Dorsolateral prefrontal cortex (tissue), 120 donors: ENCODE measurements at regions of chr12 and their contacts with region 1.

Region 1: DNA sequence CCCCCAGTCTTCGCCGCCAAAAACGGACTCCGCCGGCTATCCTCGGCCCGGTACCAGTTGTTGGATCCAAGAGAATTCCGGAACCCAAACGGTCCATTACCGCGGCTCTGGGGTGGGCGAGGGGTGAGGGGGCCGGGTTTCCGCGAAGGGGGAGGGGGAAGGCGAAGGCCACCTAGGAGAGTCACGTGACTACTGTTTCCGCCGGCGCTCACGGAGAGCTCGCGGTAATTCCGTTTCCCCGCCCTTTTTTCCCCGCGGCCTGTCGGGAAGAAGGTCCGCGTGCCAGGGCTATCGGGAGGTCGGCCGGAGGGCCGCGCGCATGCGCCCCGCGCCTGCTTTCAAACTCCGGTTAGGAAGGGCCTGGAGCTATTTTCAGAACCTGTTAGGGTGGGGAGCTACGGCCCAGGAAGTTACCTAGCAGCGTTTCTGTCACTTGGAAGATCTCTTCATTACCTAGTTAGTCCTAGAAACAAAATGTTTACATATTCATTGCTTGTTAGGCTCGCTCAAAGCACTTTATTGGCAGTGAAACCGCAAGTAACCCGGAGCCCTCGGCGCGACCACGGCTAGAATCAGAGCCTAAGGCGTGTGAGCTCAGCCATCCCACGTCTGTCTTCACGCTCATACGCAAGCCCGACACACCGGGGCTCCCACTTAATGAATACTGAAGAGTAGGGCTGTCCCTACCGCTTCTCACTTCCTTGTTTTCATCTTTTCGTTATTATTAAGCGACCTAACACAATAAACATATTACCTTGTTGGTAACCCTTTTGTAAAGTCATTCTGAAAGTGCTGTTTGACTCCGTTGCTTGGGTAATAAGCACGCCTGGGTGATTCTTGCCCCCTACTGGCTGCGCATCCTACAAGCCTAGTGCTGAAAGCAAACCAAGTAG is 624 bp upstream of the SBNO1 start:
- DNase-seq: peak; percentile 94 to 97 (median 97)
- H3K4me3 ChIP-seq: peak overlapping the region; percentile 56 to 97 (median 87)
- H3K27ac ChIP-seq: peak overlapping the region; percentile 76 to 99 (median 97)
- H3K27me3 ChIP-seq: no peaks in the 10 kb centered on the region
- CTCF ChIP-seq: peak; percentile 31 to 82 (median 71)

Region 2: DNA sequence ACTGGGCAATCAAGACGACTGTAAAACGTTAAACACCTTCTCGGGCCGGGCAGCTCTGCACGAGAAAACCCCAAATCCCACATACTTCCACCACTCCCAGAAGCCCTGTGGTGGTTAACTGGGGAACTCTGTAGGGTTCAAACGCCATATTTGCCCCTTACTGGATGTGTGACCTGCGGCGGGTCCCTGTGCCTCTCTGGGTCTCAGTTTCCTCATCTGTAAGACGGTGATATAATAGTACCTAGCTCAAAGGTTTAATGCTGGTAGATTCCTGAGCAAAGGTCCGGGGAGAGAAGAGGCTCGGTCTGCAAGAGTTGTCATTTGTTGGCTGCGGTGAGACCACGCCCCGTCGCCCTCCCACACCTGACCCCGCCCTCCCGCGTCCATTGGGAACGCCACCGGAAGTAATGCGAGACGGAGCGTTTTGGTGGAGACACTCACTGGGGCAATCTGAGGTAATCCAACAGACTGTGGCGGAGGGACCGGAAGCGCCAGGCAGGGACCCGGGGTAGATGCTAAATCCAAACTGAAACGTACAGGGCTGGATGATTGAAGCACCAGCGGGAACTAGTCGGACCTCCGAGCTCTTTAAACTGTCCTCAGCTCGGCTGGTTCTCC is 390.9 kb before region 1 on chr12:
- intact Hi-C with region 1: loop called in 1 of 2 experiments (anchors 10 kb)
- DNase-seq: peak; percentile 97 to 99 (median 98)
- H3K4me3 ChIP-seq: peak overlapping the region; percentile 71 to 100 (median 94)
- H3K27ac ChIP-seq: peak overlapping the region; percentile 94 to 100 (median 99)
- H3K27me3 ChIP-seq: no peaks in the 10 kb centered on the region
- CTCF ChIP-seq: peak in 5 of 56 donors; percentile 7 to 21 (median 15)

Region 3: DNA sequence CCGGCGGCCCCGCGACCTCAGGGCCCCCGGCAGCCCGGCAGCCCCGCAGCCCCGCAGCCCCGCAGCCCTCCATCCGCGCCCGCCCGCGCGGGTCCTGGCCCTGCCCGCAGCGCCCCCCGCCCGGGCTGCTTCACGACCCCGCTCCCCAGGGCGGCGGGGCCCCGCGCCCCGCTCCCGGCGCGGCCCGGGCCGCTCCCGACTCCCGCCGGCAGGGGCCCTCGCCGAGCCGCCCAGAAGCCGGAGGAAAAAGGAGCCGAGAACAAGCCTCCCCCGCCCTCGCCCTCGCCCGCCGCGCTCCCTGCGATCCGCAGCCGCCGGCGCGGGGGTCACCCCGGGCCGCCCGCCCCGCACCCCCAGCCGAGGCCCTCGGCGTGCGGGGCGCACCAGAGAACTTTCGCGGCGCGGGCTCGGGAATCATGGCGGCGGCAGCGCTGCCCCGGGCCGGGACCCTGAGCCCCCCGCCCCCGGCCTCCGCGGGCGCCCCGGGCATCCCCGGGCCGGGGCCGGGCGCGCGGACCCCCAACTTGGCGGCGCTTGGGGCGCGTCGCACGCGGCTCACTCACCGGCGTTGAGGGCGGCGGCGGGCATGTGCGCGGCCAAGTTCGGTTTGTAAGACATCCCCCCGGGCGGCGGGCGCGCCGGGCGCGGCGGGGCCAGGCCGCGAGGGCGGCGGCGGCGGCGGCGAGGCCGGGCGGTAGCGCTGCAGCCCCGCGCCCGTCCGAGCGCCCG is 94.1 kb before region 1 on chr12:
- intact Hi-C with region 1: loop called (anchors 1 to 2 kb)
- DNase-seq: peak in 9 of 10 donors; percentile 56 to 83 (median 68)
- H3K4me3 ChIP-seq: peak overlapping the region; percentile 50 to 87 (median 73)
- H3K27ac ChIP-seq: peak overlapping the region in 56 of 59 donors; percentile 88 to 99 (median 98)
- H3K27me3 ChIP-seq: no peaks in the 10 kb centered on the region
- CTCF ChIP-seq: peak in 39 of 56 donors; percentile 5 to 74 (median 47)

Region 4: GRCh38 chr12:123388177-123388947 is 23.1 kb after region 1 on chr12:
- intact Hi-C with region 1: loop called (anchors 1 to 2 kb)
- DNase-seq: peak; percentile 53 to 86 (median 71)
- H3K4me3 ChIP-seq: peak overlapping the region; percentile 47 to 93 (median 70)
- H3K27ac ChIP-seq: peak overlapping the region; percentile 75 to 98 (median 93)
- H3K27me3 ChIP-seq: no peaks in the 10 kb centered on the region
- CTCF ChIP-seq: peak in 50 of 56 donors; percentile 21 to 71 (median 46)

Region 5: DNA sequence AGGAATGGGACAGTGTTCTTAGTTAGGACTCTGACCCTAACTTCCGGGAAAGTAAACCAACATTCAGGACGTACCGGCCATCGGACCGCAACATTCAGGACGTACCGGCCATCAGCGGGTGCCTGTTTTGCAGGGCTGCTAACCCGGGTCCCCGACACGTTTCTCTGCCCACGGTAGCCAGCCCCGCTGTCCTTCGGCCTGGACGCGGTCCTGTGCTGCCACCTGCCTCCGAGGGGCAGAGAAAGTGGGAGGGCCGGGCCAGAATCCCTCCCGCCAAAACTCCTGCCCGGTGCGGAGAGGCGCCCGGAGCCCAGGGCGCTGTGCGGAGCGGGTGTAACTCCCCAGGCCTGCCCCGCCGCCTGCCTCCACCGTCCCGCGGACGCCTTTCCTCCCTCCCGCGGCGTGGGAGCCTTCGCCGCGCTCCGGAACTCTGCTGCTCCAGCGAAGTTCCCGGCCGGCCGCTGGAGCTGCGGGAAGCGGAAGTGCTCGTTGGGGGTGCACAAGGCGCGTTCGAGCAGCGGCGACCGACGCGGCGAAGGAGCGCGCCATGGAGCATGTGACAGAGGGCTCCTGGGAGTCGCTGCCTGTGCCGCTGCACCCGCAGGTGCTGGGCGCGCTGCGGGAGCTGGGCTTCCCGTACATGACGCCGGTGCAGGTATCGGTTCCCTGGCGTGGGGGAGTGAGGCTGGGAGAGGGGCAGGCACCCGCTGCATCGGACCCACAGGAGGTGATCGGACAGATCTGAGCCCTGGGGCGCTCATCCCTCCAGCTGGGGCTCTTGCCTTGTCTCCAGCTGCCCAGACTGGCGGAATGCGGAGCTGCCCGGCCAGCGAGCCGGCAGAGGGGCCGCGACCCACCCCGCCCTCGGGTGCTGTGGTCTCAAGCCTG is 236.6 kb after region 1 on chr12 and contains the start of gene DDX55:
- intact Hi-C with region 1: loop called in 1 of 2 experiments (anchors 1 kb)
- DNase-seq: peak; percentile 59 to 89 (median 84)
- H3K4me3 ChIP-seq: peak within 1 kb of the TSS; percentile 75 to 100 (median 98)
- H3K27ac ChIP-seq: peak within 1 kb of the TSS; percentile 26 to 96 (median 88)
- H3K27me3 ChIP-seq: no peaks in the 10 kb centered on the region
- CTCF ChIP-seq: peak; percentile 19 to 88 (median 68)
- total RNA-seq, gene DDX55: 14.3 to 32.8 (median 20.8) TPM